Cardiac septum (tissue), 1 donor: ENCODE measurements at regions of chr5 and their contacts with region 1.

Region 1: GRCh38 chr5:59367791-59368394 is 525.6 kb downstream of the PDE4D start:
- DNase-seq: no peak

Region 2: GRCh38 chr5:59039296-59040023 is 328.4 kb before region 1 on chr5:
- intact Hi-C with region 1: loop called (anchors 10 kb)
- DNase-seq: peak; percentile 94

Region 3: GRCh38 chr5:59188419-59189225 is 179.3 kb before region 1 on chr5:
- intact Hi-C with region 1: loop called (anchors 2 kb)
- DNase-seq: peak; percentile 83

Region 4: DNA sequence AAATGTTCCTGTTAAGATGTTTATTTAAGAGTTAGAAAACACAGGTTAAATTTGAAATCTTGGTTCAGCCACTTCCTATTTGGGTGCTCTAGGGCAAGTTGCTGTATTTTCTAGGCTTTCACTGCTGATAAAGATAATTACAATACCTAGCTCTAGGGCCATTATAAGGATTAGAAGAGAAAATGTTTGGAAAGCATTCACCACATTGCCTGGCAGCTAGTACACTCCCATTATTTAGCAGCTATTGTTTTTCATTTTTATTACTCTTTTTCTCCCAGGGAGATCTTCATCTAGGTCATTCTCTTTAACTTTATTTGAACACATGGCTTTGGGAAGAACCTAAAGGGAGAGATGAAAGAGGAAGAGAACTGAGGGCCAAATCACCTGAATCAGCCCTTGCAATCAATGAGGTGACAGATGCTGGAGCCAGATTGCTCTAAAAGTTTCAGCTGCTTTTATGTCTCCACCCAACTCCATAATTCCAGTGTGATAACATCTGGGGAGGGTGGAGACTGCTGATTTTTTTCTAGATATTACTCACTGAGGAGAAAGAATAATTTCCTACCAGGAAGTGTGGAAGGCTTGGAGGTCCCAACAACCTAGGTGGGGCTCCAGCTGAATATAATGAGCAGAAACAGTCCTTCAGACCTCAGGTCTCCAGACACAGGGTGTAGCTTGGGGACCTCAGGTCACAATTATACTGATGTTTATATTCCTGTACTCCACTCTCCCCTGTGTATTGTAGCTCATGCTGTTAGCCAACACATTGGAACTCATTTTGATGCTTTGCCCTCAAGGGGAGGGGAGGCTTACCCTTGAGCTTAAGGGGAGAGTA is 145.0 kb before region 1 on chr5:
- intact Hi-C with region 1: loop called (anchors 5 kb)
- DNase-seq: no peak

Region 5: GRCh38 chr5:59449905-59450644 is 82.2 kb after region 1 on chr5:
- intact Hi-C with region 1: no loop called
- DNase-seq: no peak